ENCODE measurements at regions of chr20 and their contacts with region 1.

Region 1: DNA sequence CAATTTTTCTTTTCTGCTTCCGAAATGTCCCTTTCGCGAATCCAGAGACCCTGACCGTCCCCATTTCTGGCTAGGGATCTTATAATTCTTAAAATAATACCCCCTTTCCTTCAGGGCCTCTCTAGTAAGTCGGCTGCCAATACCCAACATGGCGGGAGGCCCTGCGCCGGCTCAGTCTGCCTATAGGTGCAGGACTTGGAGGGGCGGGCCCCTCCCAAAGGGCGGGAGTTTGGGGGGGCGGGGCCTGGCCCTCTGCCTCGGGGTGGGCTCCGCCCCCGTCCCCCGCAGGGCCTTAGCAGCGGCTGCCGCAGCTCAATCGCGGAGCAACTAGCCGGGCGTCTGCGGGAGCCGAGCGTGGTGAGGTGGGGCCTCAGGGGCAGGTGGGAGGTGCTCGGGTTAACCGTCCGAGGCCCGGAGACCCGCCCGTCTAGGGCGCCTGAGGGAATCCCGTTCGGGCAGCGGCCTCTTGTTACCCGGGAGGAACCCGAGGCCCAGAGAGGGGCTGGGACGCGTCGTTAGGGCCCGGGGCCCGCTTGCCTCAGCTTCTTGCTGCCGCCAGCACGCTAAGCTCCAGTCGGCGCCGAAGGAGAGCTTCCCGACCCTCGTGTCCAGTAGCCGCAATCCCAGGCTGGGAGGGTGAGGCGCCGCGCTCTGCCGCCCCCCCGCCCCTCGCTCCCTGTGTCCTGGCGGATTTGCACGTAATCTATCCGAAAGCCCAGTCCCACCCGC is at the start of gene CEP250:
- DNase-seq: peak; percentile 96
- H3K4me3 ChIP-seq: peak within 1 kb of the TSS; percentile 79 to 98 (median 90)
- H3K27ac ChIP-seq: peak within 1 kb of the TSS; percentile 98
- H3K4me1 ChIP-seq: peaks cover 2 to 6% (median 5%) of the 10 kb centered on the region in 4 experiments; a peak in 2 of 7 replicates
- H3K27me3 ChIP-seq: no peaks in the 10 kb centered on the region
- CTCF ChIP-seq: no peak
- EP300 ChIP-seq: no peak
- POLR2A ChIP-seq: peak; percentile 65 to 87
- RAD21 ChIP-seq: no peak
- total RNA-seq, gene CEP250: 33.1 and 33.7 TPM in 2 replicates

Region 2: GRCh38 chr20:35344354-35344837 is 110.6 kb before region 1 on chr20:
- CTCF ChIA-PET with region 1: interaction called, 3 read pairs
- POLR2A ChIA-PET with region 1: interaction called, 10 read pairs
- DNase-seq: no peak
- H3K4me3 ChIP-seq: no peak overlapping the region
- H3K27ac ChIP-seq: no peak overlapping the region
- H3K4me1 ChIP-seq: no peaks in the 10 kb centered on the region
- H3K27me3 ChIP-seq: no peaks in the 10 kb centered on the region
- CTCF ChIP-seq: no peak
- EP300 ChIP-seq: no peak
- POLR2A ChIP-seq: no peak
- RAD21 ChIP-seq: no peak

Region 3: DNA sequence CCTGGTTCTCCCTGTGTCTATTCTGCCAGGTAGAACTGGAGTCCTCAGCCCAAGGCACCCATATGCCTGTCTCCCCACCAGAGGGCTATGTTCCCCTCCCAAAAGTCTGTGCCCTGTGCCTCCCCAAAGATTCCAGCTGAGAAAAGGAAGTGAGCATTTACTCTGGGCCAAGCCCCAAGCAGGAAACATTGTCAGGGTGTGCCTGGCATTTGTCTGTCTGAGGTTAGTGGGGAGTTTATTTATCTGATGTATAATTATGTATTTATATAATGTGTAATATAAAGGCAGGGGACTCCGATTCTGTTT is 22.7 kb before region 1 on chr20:
- CTCF ChIA-PET with region 1: interaction called, 78 read pairs
- POLR2A ChIA-PET with region 1: interaction called, 98 read pairs
- DNase-seq: no peak
- H3K4me3 ChIP-seq: no peak overlapping the region
- H3K27ac ChIP-seq: no peak overlapping the region
- H3K4me1 ChIP-seq: peaks cover 5 to 22% (median 12%) of the 10 kb centered on the region in 4 experiments
- H3K27me3 ChIP-seq: no peaks in the 10 kb centered on the region
- CTCF ChIP-seq: peak; percentile 17 to 27 (median 22); a peak in 3 of 4 replicates
- EP300 ChIP-seq: no peak
- POLR2A ChIP-seq: no peak
- RAD21 ChIP-seq: peak in 1 of 2 experiments; percentile 27; a peak in 1 of 4 replicates

Region 4: GRCh38 chr20:35437491-35437998 is 17.5 kb before region 1 on chr20:
- CTCF ChIA-PET with region 1: interaction called, 78 read pairs
- POLR2A ChIA-PET with region 1: interaction called, 98 read pairs
- DNase-seq: no peak
- H3K4me3 ChIP-seq: no peak overlapping the region
- H3K27ac ChIP-seq: no peak overlapping the region
- H3K4me1 ChIP-seq: peaks cover 5 to 21% (median 12%) of the 10 kb centered on the region in 4 experiments
- H3K27me3 ChIP-seq: no peaks in the 10 kb centered on the region
- CTCF ChIP-seq: no peak
- EP300 ChIP-seq: no peak
- POLR2A ChIP-seq: no peak
- RAD21 ChIP-seq: no peak

Region 5: GRCh38 chr20:35468673-35469334 is 13.8 kb after region 1 on chr20:
- CTCF ChIA-PET with region 1: interaction called, 9 read pairs
- POLR2A ChIA-PET with region 1: interaction called, 27 read pairs
- DNase-seq: no peak
- H3K4me3 ChIP-seq: no peak overlapping the region
- H3K27ac ChIP-seq: no peak overlapping the region
- H3K4me1 ChIP-seq: no peaks in the 10 kb centered on the region
- H3K27me3 ChIP-seq: no peaks in the 10 kb centered on the region
- CTCF ChIP-seq: no peak
- EP300 ChIP-seq: no peak
- POLR2A ChIP-seq: no peak
- RAD21 ChIP-seq: no peak

Region 6: GRCh38 chr20:35541783-35542588 is 86.9 kb after region 1 on chr20 and contains the start of gene ERGIC3:
- CTCF ChIA-PET with region 1: no interaction called
- POLR2A ChIA-PET with region 1: interaction called, 21 read pairs
- DNase-seq: peak; percentile 97 to 99
- H3K4me3 ChIP-seq: peak within 1 kb of the TSS; percentile 74 to 82 (median 76)
- H3K27ac ChIP-seq: peak within 1 kb of the TSS; percentile 91
- H3K4me1 ChIP-seq: peaks cover 2 to 6% (median 4%) of the 10 kb centered on the region in 4 experiments; a peak in 5 of 7 replicates
- H3K27me3 ChIP-seq: no peaks in the 10 kb centered on the region
- CTCF ChIP-seq: peak in 2 of 3 experiments; percentile 4 to 8; a peak in 1 of 4 replicates
- EP300 ChIP-seq: no peak
- POLR2A ChIP-seq: peak; percentile 69 to 93
- RAD21 ChIP-seq: 0 out of 4 replicates have a peak, but pooled peaks of 1 of the 2 experiments have one; percentile 1
- total RNA-seq, gene ERGIC3: 174 and 178 TPM in 2 replicates